Astrocyte of the cerebellum (primary cell): ENCODE measurements at regions of chr20 and their contacts with region 1.

Region 1: GRCh38 chr20:3577366-3577765 is 85.8 kb downstream of the GFRA4 start:
- DNase-seq: no peak
- H3K4me3 ChIP-seq: no peak overlapping the region
- CTCF ChIP-seq: no peak

Region 2: GRCh38 chr20:3000852-3001523 is 576.4 kb before region 1 on chr20:
- in situ Hi-C with region 1: no loop called
- DNase-seq: no peak
- H3K4me3 ChIP-seq: no peak overlapping the region
- CTCF ChIP-seq: no peak

Region 3: GRCh38 chr20:3262566-3262965 is 314.8 kb before region 1 on chr20:
- in situ Hi-C with region 1: no loop called
- DNase-seq: no peak
- H3K4me3 ChIP-seq: no peak overlapping the region
- CTCF ChIP-seq: no peak

Region 4: GRCh38 chr20:3612795-3613572 is 35.6 kb after region 1 on chr20:
- in situ Hi-C with region 1: loop called (anchors 5 kb)
- DNase-seq: no peak
- H3K4me3 ChIP-seq: no peak overlapping the region
- CTCF ChIP-seq: no peak